ENCODE measurements at regions of chr9 and their contacts with region 1.

Region 1: GRCh38 chr9:85610074-85610860 is 131.5 kb downstream of the AGTPBP1 start:
- DNase-seq: peak in 1 of 10 donors; percentile 54

Region 2: GRCh38 chr9:84397151-84397728 is 1213.0 kb before region 1 on chr9:
- intact Hi-C with region 1: loop called (anchors 1 kb)
- DNase-seq: peak; percentile 60 to 96 (median 74)

Region 3: GRCh38 chr9:85040821-85041465 is 569.3 kb before region 1 on chr9:
- intact Hi-C with region 1: loop called (anchors 10 kb)
- DNase-seq: peak; percentile 65 to 98 (median 82)

Region 4: GRCh38 chr9:85258823-85259370 is 351.4 kb before region 1 on chr9:
- intact Hi-C with region 1: loop called (anchors 5 kb)
- DNase-seq: peak; percentile 68 to 97 (median 82)

Region 5: DNA sequence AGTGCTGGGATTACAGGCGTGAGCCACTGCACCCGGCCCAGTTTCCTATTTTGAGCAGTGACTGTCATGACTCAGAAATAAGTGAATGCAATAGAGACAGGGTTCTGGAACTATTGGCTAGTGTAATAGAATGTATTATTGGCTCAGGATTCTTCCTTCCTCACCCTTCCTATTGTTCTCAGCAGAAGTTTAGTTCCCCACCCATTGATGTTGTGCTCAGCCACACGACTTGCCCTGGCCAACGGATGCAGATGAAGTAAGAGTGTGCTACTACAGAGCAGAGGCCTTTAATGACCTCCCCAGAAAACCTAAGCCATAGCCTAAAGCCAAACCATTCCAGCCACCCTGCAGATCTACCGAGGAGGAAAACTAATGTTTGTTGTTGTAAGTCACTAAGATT is 156.4 kb before region 1 on chr9:
- intact Hi-C with region 1: no loop called
- DNase-seq: no peak

Region 6: DNA sequence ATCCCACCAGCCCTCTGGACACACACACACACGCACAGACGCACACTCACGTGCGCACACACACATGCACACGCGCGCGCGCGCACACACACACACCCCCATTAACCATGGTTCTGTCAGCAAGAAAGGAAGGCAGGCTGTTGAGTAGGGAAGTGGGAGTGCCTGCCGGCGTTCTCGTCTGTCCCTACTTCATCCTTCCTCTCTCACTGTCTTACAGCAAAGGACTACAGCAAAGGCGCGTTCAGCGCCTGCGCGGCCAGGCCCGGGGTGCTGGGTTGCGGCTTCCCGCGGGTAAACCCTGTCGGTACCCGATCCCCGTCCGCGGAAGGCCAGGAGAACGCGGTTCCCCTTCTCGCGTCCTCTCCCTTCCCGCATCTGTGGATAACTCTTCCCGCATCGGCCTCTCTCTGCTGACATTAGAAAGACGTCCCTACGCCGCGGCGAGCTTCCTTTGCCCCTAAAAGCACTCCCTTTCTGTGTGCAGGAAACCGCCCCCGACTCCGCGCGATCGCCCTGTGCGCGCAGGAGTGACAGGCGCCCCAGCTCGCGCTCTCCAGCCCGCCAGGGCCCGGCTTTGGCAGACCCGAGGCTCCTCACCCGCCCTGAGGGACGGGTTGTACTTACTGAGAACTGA is 87.7 kb before region 1 on chr9:
- intact Hi-C with region 1: loop called (anchors 5 kb)
- DNase-seq: peak in 9 of 10 donors; percentile 43 to 96 (median 68)

Region 7: DNA sequence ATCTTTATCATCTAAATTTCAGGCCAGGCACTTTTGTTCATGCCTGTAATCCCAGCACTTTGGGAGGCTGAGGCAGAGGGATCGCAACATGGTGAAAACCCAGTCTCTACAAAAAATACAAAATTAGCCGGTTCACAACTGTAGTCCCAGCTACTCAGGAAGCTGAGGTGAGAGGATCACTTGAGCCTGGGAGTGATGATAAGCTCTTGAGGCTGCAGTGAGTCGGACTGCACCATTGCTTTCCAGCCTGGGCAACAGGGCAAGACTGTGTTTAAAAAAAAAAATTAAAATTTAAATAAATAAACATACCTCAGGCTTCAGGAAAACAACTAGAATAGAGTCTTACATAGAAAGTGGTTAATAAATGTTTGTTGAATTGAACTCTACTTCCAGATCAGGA is 16.0 kb before region 1 on chr9:
- intact Hi-C with region 1: no loop called
- DNase-seq: no peak

Measured in posterior cingulate gyrus (tissue), 11 donors.